Cardiac septum (tissue), 1 donor: ENCODE measurements at regions of chr9 and their contacts with region 1.

Region 1: DNA sequence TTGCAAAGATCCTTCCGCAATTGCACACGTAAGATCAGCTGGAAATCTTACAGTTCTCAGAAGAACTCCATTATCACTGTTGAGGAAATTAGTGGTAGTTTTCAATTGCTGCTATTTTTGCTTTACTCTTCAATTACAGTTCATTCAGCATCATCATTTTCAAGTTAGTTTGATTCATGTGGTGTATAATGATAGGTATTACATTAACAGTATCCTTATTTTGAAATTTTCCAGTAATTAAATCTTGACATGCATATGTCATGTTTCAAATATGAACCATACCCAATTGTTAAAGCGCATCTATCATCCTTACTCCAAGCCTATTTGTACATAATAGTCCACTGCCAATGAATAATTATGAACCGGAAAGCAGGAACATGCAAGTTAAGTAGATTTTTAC is 60.3 kb downstream of the NR6A1 start:
- DNase-seq: no peak

Region 2: DNA sequence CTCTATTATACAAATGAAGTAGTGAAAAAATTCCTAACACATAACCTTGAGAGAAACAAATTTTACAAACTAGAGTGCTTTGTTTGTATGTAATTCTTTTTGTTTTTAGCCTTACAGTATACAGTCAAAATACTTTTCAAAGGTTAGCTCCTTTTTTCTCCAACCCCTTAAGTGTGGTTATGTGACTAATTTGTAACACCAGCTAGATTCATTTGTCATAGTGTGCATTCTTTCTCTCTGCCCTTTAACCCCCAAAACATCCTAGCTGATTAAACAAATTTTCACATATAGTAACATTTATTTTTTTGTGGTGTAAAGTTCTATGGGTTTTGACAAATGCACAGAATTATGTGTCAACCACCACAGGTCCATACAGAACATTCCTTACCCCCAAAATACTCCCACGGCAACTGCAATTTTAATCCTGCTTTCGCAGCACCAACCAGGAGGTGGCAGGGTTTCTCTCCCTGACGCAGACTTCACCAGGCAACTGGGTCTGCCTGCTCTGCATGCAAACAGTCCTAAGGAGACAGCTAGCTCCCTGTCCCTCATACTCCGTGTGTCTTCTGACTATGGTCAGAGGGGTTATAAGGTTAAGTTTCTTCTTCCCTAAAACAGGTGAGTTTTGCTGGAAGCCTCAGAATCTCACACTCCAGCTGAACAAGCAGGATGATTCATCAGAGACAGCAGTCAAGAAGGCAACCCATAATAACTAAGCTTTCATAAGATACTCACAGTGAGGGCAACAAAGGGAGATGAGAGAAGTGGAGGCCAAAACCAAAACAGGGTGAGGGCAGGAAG is 159.1 kb before region 1 on chr9:
- intact Hi-C with region 1: loop called (anchors 2 kb)
- DNase-seq: no peak

Region 3: GRCh38 chr9:124771021-124771866 is 60.5 kb after region 1 on chr9 and contains the start of gene NR6A1:
- intact Hi-C with region 1: no loop called
- DNase-seq: peak; percentile 98
- total RNA-seq, gene NR6A1: 2.2 TPM